Tibial artery (tissue), 4 donors: ENCODE measurements at regions of chr14 and their contacts with region 1.

Region 1: DNA sequence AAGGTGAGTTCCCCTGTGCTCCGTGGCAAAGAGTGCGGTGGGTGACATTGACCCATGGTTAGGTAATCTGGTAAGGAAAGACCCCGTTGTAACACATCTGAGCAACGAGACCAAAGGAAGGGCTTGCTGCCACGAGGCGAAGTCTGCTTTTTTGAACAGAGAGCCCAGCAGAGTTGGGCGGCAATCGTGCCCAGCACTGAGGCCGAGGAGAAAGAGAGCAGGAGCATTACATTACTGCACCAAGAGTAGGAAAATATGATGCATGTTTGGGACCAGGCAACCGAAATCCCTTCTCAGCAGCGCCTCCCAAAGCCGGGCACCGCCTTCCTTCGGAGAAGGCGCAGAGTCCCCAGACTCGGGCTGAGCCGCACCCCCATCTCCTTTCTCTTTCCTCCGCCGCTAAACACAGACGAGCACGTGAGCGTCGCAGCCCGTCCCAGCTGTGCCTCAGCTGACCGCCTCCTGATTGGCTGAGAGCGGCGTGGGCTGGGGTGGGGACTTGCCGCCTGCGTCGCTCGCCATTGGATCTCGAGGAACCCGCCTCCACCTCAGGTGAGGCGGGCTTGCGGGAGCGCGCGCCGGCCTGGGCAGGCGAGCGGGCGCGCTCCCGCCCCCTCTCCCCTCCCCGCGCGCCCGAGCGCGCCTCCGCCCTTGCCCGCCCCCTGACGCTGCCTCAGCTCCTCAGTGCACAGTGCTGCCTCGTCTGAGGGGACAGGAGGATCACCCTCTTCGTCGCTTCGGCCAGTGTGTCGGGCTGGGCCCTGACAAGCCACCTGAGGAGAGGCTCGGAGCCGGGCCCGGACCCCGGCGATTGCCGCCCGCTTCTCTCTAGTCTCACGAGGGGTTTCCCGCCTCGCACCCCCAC is at the start of gene HIF1A:
- DNase-seq: peak; percentile 97 to 99
- H3K4me3 ChIP-seq: peak within 1 kb of the TSS; percentile 72 to 90
- H3K27ac ChIP-seq: peak within 1 kb of the TSS; percentile 92 to 99
- H3K4me1 ChIP-seq: peaks cover 0 to 46% (median 3%) of the 10 kb centered on the region in 4 donors
- H3K27me3 ChIP-seq: no peaks in the 10 kb centered on the region
- CTCF ChIP-seq: peak in 1 of 2 experiments; percentile 8

Region 2: DNA sequence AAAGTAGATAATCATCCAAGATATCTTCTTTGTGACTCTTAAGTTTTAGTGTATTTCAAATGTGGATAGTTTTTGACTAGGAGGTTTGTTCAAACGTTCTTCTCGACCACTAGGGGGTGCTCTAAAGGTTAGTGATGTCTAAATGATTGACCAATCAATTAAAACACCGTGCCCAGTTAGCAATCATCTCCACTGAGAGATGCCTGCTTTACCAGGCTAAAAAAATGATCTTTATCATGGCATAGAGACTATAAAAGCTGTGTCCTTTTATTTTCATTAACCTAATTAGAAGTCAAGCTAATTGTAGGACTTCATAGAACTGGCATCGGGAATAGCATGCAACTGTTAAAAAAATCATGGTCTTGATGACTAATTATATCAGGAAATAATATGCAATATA is 219.7 kb before region 1 on chr14:
- intact Hi-C with region 1: loop called (anchors 5 kb)
- DNase-seq: no peak
- H3K4me3 ChIP-seq: no peak overlapping the region
- H3K27ac ChIP-seq: peak overlapping the region; percentile 82 to 86
- H3K4me1 ChIP-seq: peaks cover 0 to 73% (median 56%) of the 10 kb centered on the region in 4 donors
- H3K27me3 ChIP-seq: no peaks in the 10 kb centered on the region
- CTCF ChIP-seq: peak; percentile 62 to 71

Region 3: GRCh38 chr14:61750708-61751474 is 55.8 kb after region 1 on chr14:
- intact Hi-C with region 1: loop called (anchors 5 kb)
- DNase-seq: peak; percentile 88 to 96
- H3K4me3 ChIP-seq: peak overlapping the region; percentile 60 to 71
- H3K27ac ChIP-seq: peak overlapping the region; percentile 93 to 95
- H3K4me1 ChIP-seq: peaks cover 0 to 48% (median 6%) of the 10 kb centered on the region in 4 donors
- H3K27me3 ChIP-seq: no peaks in the 10 kb centered on the region
- CTCF ChIP-seq: no peak